Left ventricle myocardium inferior (tissue), 1 donor: ENCODE measurements at regions of chr6 and their contacts with region 1.

Region 1: GRCh38 chr6:12233693-12234571 is 56.2 kb upstream of the EDN1 start:
- DNase-seq: no peak
- H3K4me3 ChIP-seq: no peak overlapping the region
- H3K27ac ChIP-seq: no peak overlapping the region
- H3K4me1 ChIP-seq: no peaks in the 10 kb centered on the region
- H3K27me3 ChIP-seq: peaks cover under 1% of the 10 kb centered on the region
- CTCF ChIP-seq: peak; percentile 83

Region 2: DNA sequence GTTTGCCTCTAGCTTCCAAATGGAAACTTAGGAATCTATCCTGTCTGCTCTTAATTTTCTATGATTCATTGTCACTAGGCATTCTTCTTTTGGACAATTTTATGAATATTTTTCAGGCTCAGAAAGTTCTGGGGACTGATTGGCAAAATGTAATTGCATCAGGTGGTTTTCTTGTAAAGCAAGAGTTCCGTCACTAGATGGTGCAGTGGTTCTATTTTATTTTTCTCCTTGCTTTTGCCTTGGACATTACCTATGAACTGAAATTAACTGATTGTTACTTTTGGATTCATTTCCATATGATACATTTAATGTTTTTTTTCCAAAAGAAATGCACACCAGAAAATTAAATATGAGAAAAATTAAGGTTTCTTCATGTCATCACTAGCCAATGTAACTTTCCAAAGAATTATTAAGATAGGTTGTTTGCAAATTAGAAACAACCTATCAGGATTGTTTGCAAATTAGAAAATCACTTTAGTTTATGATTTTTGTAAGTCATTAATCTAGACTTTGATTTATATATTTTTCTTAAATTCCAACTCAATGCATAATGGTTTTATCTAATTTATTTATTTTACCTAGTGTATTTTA is 648.4 kb before region 1 on chr6:
- intact Hi-C with region 1: loop called (anchors 10 kb)
- DNase-seq: no peak
- H3K4me3 ChIP-seq: no peak overlapping the region
- H3K27ac ChIP-seq: no peak overlapping the region
- H3K4me1 ChIP-seq: no peaks in the 10 kb centered on the region
- H3K27me3 ChIP-seq: no peaks in the 10 kb centered on the region
- CTCF ChIP-seq: peak; percentile 75

Region 3: GRCh38 chr6:12709116-12709515 is 475.2 kb after region 1 on chr6:
- intact Hi-C with region 1: no loop called
- DNase-seq: no peak
- H3K4me3 ChIP-seq: no peak overlapping the region
- H3K27ac ChIP-seq: no peak overlapping the region
- H3K4me1 ChIP-seq: no peaks in the 10 kb centered on the region
- H3K27me3 ChIP-seq: peaks cover 60% of the 10 kb centered on the region
- CTCF ChIP-seq: no peak